ENCODE measurements at regions of chr4 and their contacts with region 1.

Region 1: DNA sequence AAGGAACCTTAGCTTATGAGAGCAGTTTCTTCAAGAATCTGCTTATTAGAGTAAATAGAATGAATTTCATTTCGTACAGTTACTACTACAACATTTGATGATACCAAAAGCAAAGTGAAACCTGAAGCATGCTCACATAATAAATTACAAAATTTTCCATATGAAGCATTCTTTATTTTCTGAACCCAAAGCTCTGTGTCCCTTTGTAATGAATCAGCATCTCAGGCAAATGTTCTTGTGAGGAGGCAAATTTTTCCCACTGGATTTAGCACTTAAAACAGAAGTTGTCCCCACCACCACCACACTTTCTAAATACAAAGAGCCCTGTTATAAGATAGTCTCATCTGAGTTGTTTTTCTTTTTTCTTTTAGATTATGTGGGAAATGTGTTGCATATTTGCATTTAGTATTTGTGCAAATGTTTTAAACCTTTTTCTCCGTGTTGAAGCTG is 70.7 kb upstream of the NFKB1 start:
- DNase-seq: no peak
- ATAC-seq: no peak
- H3K4me3 ChIP-seq: peak overlapping the region; percentile 57 to 78 (median 63)
- H3K27ac ChIP-seq: peak overlapping the region; percentile 42
- H3K4me1 ChIP-seq: peaks cover 18% of the 10 kb centered on the region
- H3K27me3 ChIP-seq: no peaks in the 10 kb centered on the region; a peak in 1 of 5 replicates
- CTCF ChIP-seq: no peak
- EP300 ChIP-seq: no peak
- POLR2A ChIP-seq: no peak
- RAD21 ChIP-seq: no peak

Region 2: GRCh38 chr4:102472441-102473013 is 42.0 kb after region 1 on chr4:
- CTCF ChIA-PET with region 1: no interaction called
- POLR2A ChIA-PET with region 1: no interaction called
- in situ Hi-C with region 1: no loop called
- intact Hi-C with region 1: no loop called
- DNase-seq: no peak
- ATAC-seq: peak; percentile 27; the same call in 1 of the 3 replicates
- H3K4me3 ChIP-seq: no peak overlapping the region
- H3K27ac ChIP-seq: no peak overlapping the region
- H3K4me1 ChIP-seq: peaks cover 22% of the 10 kb centered on the region
- H3K27me3 ChIP-seq: no peaks in the 10 kb centered on the region
- CTCF ChIP-seq: no peak
- EP300 ChIP-seq: no peak
- POLR2A ChIP-seq: no peak
- RAD21 ChIP-seq: no peak

Region 3: GRCh38 chr4:103008875-103009729 is 578.6 kb after region 1 on chr4:
- CTCF ChIA-PET with region 1: interaction called, 5 read pairs
- POLR2A ChIA-PET with region 1: no interaction called
- in situ Hi-C with region 1: loop called (anchors 10 kb)
- intact Hi-C with region 1: loop called (anchors 5 kb)
- DNase-seq: peak; percentile 72
- ATAC-seq: peak; percentile 94
- H3K4me3 ChIP-seq: no peak overlapping the region
- H3K27ac ChIP-seq: no peak overlapping the region
- H3K4me1 ChIP-seq: peaks cover 13% of the 10 kb centered on the region; the same call in 1 of the 2 replicates
- H3K27me3 ChIP-seq: no peaks in the 10 kb centered on the region
- CTCF ChIP-seq: peak; percentile 90
- EP300 ChIP-seq: no peak
- POLR2A ChIP-seq: no peak
- RAD21 ChIP-seq: peak; percentile 68